Panc1 (cell line): ENCODE measurements at regions of chr14 and their contacts with region 1.

Region 1: GRCh38 chr14:104331871-104332605 is 193.7 kb downstream of the KIF26A start:
- DNase-seq: no peak
- ATAC-seq: no peak
- H3K4me3 ChIP-seq: no peak overlapping the region
- H3K27ac ChIP-seq: no peak overlapping the region
- H3K4me1 ChIP-seq: no peaks in the 10 kb centered on the region
- H3K27me3 ChIP-seq: no peaks in the 10 kb centered on the region
- CTCF ChIP-seq: peak; percentile 54

Region 2: GRCh38 chr14:103832046-103832445 is 500.0 kb before region 1 on chr14:
- CTCF ChIA-PET with region 1: no interaction called
- POLR2A ChIA-PET with region 1: no interaction called
- in situ Hi-C with region 1: no loop called
- intact Hi-C with region 1: loop called (anchors 10 kb)
- DNase-seq: no peak
- ATAC-seq: no peak
- H3K4me3 ChIP-seq: no peak overlapping the region
- H3K27ac ChIP-seq: no peak overlapping the region
- H3K4me1 ChIP-seq: no peaks in the 10 kb centered on the region
- H3K27me3 ChIP-seq: no peaks in the 10 kb centered on the region
- CTCF ChIP-seq: no peak